Common myeloid progenitor, CD34-positive (primary cell): ENCODE measurements at regions of chr7 and their contacts with region 1.

Region 1: DNA sequence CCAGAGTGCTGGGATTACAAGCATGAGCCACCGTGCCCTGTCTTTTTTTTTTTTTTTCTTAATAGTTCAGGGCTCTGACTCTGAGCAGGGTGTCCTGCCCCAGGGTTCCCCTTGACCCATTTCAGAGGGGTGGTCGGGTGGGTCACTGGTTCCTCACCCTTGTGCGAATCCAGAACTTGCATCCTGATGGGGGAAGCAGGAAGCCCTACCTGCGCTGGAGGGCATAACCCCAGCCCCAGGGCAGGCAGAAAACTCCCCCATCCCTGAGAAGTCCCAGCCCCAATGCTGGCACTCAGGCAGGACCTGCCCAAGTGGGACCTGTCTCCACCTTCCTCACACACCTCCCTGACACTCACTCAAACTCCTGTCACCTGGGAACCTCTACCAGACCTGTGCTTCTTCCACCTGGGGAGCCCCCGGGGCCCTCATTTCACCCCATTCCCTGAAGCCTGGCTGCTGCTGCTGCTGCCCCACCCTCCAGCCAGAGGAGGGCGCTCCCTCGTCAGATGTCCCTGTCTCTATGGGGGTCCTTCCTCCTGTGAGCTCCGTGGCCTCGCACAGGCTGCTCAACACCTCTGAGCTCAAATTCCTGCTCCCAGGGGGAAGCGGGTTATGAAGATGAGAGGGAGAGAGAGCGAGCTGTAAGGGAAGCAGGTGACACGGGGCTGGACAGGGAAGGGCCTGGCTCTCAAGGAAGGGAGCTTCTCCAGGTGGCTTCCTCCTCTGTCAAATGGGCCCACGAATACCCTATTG is 15.1 kb upstream of the ZNF273 start:
- DNase-seq: peak; percentile 56 to 79 (median 74)
- H3K4me3 ChIP-seq: peak overlapping the region; percentile 48 to 84 (median 74)
- H3K27ac ChIP-seq: no peak overlapping the region
- H3K4me1 ChIP-seq: peaks cover 2 to 24% (median 20%) of the 10 kb centered on the region in 4 experiments
- H3K27me3 ChIP-seq: peaks cover 0 to 59% (median 32%) of the 10 kb centered on the region in 5 experiments

Region 2: GRCh38 chr7:64902806-64903721 is 15.1 kb after region 1 on chr7 and contains the start of gene ZNF273:
- CTCF ChIA-PET with region 1: interaction called, 12 read pairs
- POLR2A ChIA-PET with region 1: no interaction called
- DNase-seq: peak; percentile 88 to 96 (median 96)
- H3K4me3 ChIP-seq: peak within 1 kb of the TSS; percentile 84 to 98 (median 93)
- H3K27ac ChIP-seq: peak within 1 kb of the TSS; percentile 79 to 93
- H3K4me1 ChIP-seq: peaks cover 0 to 30% (median 10%) of the 10 kb centered on the region in 4 experiments
- H3K27me3 ChIP-seq: no peaks in the 10 kb centered on the region